ENCODE measurements at regions of chr3 and their contacts with region 1.

Region 1: GRCh38 chr3:124467980-124468902 is 262.0 kb upstream of the UMPS start:
- H3K4me3 ChIP-seq: no peak overlapping the region
- H3K27ac ChIP-seq: no peak overlapping the region
- H3K4me1 ChIP-seq: no peaks in the 10 kb centered on the region
- CTCF ChIP-seq: peak; percentile 85

Region 2: DNA sequence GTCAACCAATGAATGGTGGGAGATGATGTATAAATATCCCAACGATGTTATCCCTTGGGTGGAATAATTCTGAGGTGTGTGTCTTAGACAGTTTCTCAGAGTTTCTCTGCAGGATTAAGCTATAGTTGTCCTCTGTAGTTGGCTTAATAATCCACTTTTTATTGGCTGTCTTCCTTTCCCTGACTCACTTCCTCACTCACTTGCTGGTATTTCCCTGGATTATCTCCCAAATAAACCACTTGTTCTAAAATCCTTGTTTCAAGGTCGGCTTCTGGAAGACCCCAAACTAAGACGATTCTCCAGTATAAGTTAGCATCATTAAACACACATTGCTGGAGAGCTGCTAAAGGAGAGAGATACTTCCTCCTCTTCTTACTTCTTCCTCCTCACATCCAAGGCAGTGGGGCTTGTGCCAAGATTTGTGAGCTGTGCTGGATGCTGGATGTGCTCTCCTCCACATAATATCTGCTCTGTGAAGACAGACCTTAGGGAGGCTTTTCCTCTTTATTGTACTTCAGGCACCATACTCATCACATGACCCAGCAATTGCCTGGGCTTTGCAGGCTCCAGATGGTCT is 453.8 kb before region 1 on chr3:
- CTCF ChIA-PET with region 1: interaction called, 28 read pairs
- POLR2A ChIA-PET with region 1: no interaction called
- H3K4me3 ChIP-seq: no peak overlapping the region
- H3K27ac ChIP-seq: no peak overlapping the region
- H3K4me1 ChIP-seq: no peaks in the 10 kb centered on the region; the same call in 1 of the 2 replicates
- CTCF ChIP-seq: no peak

Region 3: DNA sequence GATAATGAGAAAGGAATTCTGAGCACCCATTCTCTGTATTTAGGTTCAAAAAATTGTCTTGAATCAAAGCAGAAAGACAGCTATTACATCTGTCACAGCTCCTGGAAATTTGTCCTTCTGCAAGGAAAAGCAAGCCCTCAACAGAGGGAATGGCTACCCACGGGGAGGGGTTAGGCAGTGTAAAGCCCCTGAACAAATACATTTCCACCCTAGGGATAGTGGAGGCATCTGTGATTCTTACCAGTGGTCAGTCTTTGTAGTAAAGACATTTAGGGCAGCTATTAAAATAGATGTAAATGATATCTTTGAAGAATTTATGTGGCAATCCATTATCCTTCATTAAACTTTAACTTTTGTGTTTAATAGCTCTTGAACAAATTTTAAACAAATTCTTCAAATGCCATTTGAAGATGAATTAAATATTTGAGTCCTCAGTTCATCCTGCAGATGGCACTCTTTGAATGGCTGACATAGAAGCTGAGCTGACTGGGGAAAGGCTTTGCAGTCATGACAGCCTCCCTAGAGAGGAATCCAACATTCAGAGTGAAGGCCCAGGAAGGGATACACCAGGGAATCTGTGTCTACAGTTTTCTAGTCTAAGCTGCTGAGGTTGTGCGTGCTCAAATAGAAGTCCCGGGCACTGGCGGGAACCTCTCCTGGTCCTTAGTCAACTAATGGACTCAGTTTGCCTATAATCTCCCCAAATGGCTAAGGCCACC is 116.7 kb before region 1 on chr3:
- CTCF ChIA-PET with region 1: interaction called, 151 read pairs
- POLR2A ChIA-PET with region 1: no interaction called
- H3K4me3 ChIP-seq: no peak overlapping the region
- H3K27ac ChIP-seq: no peak overlapping the region
- H3K4me1 ChIP-seq: no peaks in the 10 kb centered on the region
- CTCF ChIP-seq: no peak

Region 4: GRCh38 chr3:124535306-124535705 is 67.1 kb after region 1 on chr3:
- CTCF ChIA-PET with region 1: no interaction called
- POLR2A ChIA-PET with region 1: no interaction called
- H3K4me3 ChIP-seq: no peak overlapping the region
- H3K27ac ChIP-seq: no peak overlapping the region
- H3K4me1 ChIP-seq: no peaks in the 10 kb centered on the region
- CTCF ChIP-seq: no peak

Region 5: DNA sequence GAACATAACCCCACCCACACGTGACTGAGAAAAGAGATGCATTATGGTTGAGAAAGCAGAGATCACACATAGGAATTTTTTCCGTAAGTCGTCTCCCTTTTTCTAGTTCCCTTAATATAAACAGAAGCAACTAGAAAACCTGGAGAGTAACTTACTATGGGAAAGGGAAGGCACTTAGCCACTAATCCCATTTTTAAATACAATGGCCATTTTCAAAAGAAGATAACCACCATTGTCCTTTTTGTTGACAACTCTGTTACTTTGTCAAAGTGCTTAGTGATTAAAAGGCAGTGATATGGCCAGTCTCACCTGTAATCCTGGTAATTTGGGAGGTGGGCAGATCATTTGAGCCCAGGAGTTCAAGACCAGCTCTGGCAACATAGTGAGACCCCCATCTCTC is 77.7 kb after region 1 on chr3:
- CTCF ChIA-PET with region 1: interaction called, 17 read pairs
- POLR2A ChIA-PET with region 1: no interaction called
- H3K4me3 ChIP-seq: no peak overlapping the region
- H3K27ac ChIP-seq: no peak overlapping the region
- H3K4me1 ChIP-seq: no peaks in the 10 kb centered on the region
- CTCF ChIP-seq: no peak

Measured in HEK293 (cell line).